Right cardiac atrium (tissue), 5 donors: ENCODE measurements at regions of chr9 and their contacts with region 1.

Region 1: GRCh38 chr9:2979893-2980610 is 136.2 kb upstream of the PUM3 start:
- DNase-seq: no peak
- ATAC-seq: no peak
- H3K4me3 ChIP-seq: no peak overlapping the region
- H3K27ac ChIP-seq: no peak overlapping the region
- H3K4me1 ChIP-seq: no peaks in the 10 kb centered on the region
- H3K27me3 ChIP-seq: no peaks in the 10 kb centered on the region

Region 2: GRCh38 chr9:2859776-2860379 is 120.2 kb before region 1 on chr9:
- intact Hi-C with region 1: no loop called
- DNase-seq: peak; percentile 64 to 81 (median 74)
- ATAC-seq: peak in 1 of 2 donors; percentile 32
- H3K4me3 ChIP-seq: no peak overlapping the region
- H3K27ac ChIP-seq: no peak overlapping the region
- H3K4me1 ChIP-seq: no peaks in the 10 kb centered on the region
- H3K27me3 ChIP-seq: no peaks in the 10 kb centered on the region

Region 3: GRCh38 chr9:2919347-2919746 is 60.7 kb before region 1 on chr9:
- intact Hi-C with region 1: loop called in 1 of 4 experiments (anchors 10 kb)
- DNase-seq: no peak
- ATAC-seq: no peak
- H3K4me3 ChIP-seq: no peak overlapping the region
- H3K27ac ChIP-seq: no peak overlapping the region
- H3K4me1 ChIP-seq: no peaks in the 10 kb centered on the region
- H3K27me3 ChIP-seq: no peaks in the 10 kb centered on the region